T-cell (primary cell): ENCODE measurements at regions of chr3 and their contacts with region 1.

Region 1: DNA sequence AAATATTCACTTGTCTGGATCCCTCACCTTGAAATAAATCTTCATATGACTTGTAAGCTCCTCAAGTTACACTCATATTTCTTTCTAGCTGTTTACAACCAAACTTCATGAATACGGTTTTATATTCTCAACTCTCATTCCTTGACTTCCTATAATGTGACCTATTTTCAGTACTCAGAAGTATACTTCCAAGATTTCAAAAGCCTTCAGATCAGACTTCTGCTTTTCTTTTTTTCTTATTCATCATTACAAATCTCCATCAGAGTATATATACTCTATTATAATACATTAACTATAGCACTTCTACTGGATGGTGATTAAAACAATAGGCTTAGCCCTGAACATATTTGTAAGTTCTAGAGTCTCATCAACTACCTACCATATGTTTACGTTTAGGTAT is 123.6 kb upstream of the ALCAM start:
- DNase-seq: no peak
- ATAC-seq: no peak
- H3K4me3 ChIP-seq: no peak overlapping the region
- H3K4me3 Mint-ChIP-seq: no peak overlapping the region
- H3K27ac ChIP-seq: no peak overlapping the region
- H3K27ac Mint-ChIP-seq: no peak overlapping the region
- H3K4me1 ChIP-seq: no peaks in the 10 kb centered on the region
- H3K4me1 Mint-ChIP-seq: no peaks in the 10 kb centered on the region
- H3K27me3 ChIP-seq: no peaks in the 10 kb centered on the region
- H3K27me3 Mint-ChIP-seq: peaks cover 3 to 12% of the 10 kb centered on the region in 2 donors

Region 2: DNA sequence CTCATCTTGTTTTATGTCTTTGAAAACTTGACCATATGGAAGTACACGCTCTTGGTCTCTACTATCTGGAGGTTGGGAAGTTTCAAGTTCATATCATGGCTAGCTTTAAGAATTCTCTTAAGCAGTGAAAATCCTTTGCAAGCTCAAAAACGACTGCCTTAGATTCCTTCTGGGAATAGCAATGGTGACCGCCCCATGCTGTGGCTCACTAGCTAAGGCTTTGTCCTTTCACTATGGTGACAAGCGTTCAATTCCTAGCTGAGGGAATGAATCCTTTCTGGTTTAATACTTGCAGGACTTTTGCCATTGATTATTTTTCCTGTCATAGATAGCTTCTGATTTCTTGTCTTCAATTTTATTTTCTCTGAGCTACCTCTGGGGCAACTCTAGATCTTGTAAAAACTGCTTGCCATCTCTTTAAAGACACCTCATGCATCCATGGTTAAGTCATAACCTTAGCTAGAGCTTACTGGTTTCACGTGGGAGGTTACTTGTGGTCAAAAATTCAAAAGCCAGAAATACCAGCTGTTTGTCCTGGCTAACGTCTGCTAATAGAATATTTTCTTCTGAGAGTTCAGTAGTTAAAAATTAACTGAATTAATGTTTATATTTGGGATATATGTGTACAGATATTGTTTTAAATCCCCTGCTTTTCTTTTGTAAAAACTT is 1299.2 kb after region 1 on chr3:
- CTCF ChIA-PET with region 1: interaction called in 1 of 2 experiments, 10 read pairs
- POLR2A ChIA-PET with region 1: no interaction called
- DNase-seq: no peak
- ATAC-seq: no peak
- H3K4me3 ChIP-seq: no peak overlapping the region
- H3K4me3 Mint-ChIP-seq: no peak overlapping the region
- H3K27ac ChIP-seq: no peak overlapping the region
- H3K27ac Mint-ChIP-seq: no peak overlapping the region
- H3K4me1 ChIP-seq: no peaks in the 10 kb centered on the region
- H3K4me1 Mint-ChIP-seq: no peaks in the 10 kb centered on the region
- H3K27me3 ChIP-seq: no peaks in the 10 kb centered on the region
- H3K27me3 Mint-ChIP-seq: no peaks in the 10 kb centered on the region